Heart left ventricle (tissue), 16 donors: ENCODE measurements at regions of chr2 and their contacts with region 1.

Region 1: GRCh38 chr2:95115418-95115817 is 6.2 kb downstream of the MRPS5 start:
- DNase-seq: peak in 4 of 5 donors; percentile 36 to 64 (median 58)
- ATAC-seq: peak; percentile 83 to 91 (median 86)
- H3K4me3 ChIP-seq: no peak overlapping the region
- H3K27ac ChIP-seq: no peak overlapping the region
- H3K4me1 ChIP-seq: peaks cover 0 to 39% (median 24%) of the 10 kb centered on the region in 12 donors
- H3K27me3 ChIP-seq: no peaks in the 10 kb centered on the region
- CTCF ChIP-seq: peak; percentile 44 to 79 (median 68)
- POLR2A ChIP-seq: no peak

Region 2: GRCh38 chr2:94997981-94998930 is 117.2 kb before region 1 on chr2:
- intact Hi-C with region 1: no loop called
- DNase-seq: no peak
- ATAC-seq: peak in 1 of 4 donors; percentile 29
- H3K4me3 ChIP-seq: peak overlapping the region in 7 of 12 donors; percentile 10 to 31 (median 13)
- H3K27ac ChIP-seq: no peak overlapping the region
- H3K4me1 ChIP-seq: peaks cover 0 to 8% (median 0%) of the 10 kb centered on the region in 12 donors
- H3K27me3 ChIP-seq: peaks cover 0 to 42% (median 14%) of the 10 kb centered on the region in 9 donors
- CTCF ChIP-seq: no peak
- POLR2A ChIP-seq: no peak

Region 3: GRCh38 chr2:95022309-95023221 is 92.9 kb before region 1 on chr2:
- intact Hi-C with region 1: loop called in 9 of 10 experiments (anchors 1 to 10 kb)
- DNase-seq: peak; percentile 32 to 75 (median 49)
- ATAC-seq: peak; percentile 42 to 77 (median 62)
- H3K4me3 ChIP-seq: no peak overlapping the region
- H3K27ac ChIP-seq: no peak overlapping the region
- H3K4me1 ChIP-seq: peaks cover 0 to 29% (median 5%) of the 10 kb centered on the region in 12 donors
- H3K27me3 ChIP-seq: peaks cover 0 to 61% (median 28%) of the 10 kb centered on the region in 9 donors
- CTCF ChIP-seq: peak; percentile 72 to 91 (median 85)
- POLR2A ChIP-seq: no peak

Region 4: DNA sequence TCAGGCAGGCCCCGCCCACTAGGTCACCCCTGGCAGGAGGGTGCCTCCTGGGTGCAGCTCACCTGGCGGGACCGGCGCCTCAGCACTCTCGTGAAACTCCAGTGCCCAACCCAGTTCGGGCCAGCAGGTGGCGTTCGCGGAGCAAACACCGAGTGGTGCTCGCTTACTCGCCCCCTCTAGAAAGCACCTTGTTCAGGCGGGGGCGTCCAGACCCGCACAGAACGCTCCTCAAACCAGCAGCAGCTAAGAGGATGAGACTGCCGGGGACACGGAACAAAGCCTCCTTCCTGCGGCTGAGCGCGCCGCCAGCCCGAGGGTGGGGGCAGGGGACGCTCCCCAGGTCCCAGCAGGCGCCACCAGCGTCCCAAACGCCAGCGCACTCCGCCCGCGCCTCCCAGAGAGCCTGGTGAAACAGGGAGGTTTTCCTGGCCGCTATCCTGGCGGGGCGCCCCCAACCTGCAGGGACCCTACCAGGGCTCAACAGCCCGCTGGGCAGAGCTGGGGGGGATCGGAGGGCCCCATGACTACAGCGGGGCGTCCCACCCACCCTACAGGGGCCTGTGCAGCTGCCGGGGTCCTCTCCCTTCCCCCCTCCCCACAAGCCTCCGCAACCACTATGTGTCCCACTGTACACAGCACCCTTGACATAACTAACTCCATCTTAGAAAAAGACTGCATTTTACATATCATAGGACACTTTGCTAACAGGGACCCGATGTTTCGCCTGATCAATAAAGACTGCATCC is 38.5 kb before region 1 on chr2:
- intact Hi-C with region 1: loop called in 2 of 10 experiments (anchors 2 to 5 kb)
- DNase-seq: peak; percentile 46 to 85 (median 64)
- ATAC-seq: peak; percentile 64 to 87 (median 75)
- H3K4me3 ChIP-seq: peak overlapping the region in 11 of 12 donors; percentile 9 to 59 (median 46)
- H3K27ac ChIP-seq: no peak overlapping the region
- H3K4me1 ChIP-seq: peaks cover 0 to 11% (median 7%) of the 10 kb centered on the region in 12 donors
- H3K27me3 ChIP-seq: peaks cover 0 to 48% (median 21%) of the 10 kb centered on the region in 9 donors
- CTCF ChIP-seq: peak; percentile 64 to 85 (median 78)
- POLR2A ChIP-seq: no peak

Region 5: GRCh38 chr2:95179451-95179850 is 64.0 kb after region 1 on chr2:
- intact Hi-C with region 1: loop called in 1 of 10 experiments (anchors 10 kb)
- DNase-seq: peak in 4 of 5 donors; percentile 59 to 77 (median 62)
- ATAC-seq: peak; percentile 74 to 92 (median 80)
- H3K4me3 ChIP-seq: no peak overlapping the region
- H3K27ac ChIP-seq: peak overlapping the region in 9 of 12 donors; percentile 23 to 74 (median 67)
- H3K4me1 ChIP-seq: peaks cover 0 to 8% (median 1%) of the 10 kb centered on the region in 12 donors
- H3K27me3 ChIP-seq: no peaks in the 10 kb centered on the region
- CTCF ChIP-seq: no peak
- POLR2A ChIP-seq: no peak